ENCODE measurements at regions of chr15 and their contacts with region 1.

Region 1: GRCh38 chr15:76139368-76140073 is 79.7 kb downstream of the TMEM266 start:
- DNase-seq: peak; percentile 78
- H3K4me3 ChIP-seq: no peak overlapping the region
- H3K27ac ChIP-seq: no peak overlapping the region
- H3K4me1 ChIP-seq: peaks cover 3% of the 10 kb centered on the region
- H3K27me3 ChIP-seq: no peaks in the 10 kb centered on the region
- CTCF ChIP-seq: peak; percentile 96

Region 2: GRCh38 chr15:75809986-75810750 is 329.4 kb before region 1 on chr15:
- intact Hi-C with region 1: loop called (anchors 5 kb)
- DNase-seq: peak; percentile 25
- H3K4me3 ChIP-seq: no peak overlapping the region
- H3K27ac ChIP-seq: no peak overlapping the region
- H3K4me1 ChIP-seq: no peaks in the 10 kb centered on the region
- H3K27me3 ChIP-seq: no peaks in the 10 kb centered on the region
- CTCF ChIP-seq: peak; percentile 38

Region 3: DNA sequence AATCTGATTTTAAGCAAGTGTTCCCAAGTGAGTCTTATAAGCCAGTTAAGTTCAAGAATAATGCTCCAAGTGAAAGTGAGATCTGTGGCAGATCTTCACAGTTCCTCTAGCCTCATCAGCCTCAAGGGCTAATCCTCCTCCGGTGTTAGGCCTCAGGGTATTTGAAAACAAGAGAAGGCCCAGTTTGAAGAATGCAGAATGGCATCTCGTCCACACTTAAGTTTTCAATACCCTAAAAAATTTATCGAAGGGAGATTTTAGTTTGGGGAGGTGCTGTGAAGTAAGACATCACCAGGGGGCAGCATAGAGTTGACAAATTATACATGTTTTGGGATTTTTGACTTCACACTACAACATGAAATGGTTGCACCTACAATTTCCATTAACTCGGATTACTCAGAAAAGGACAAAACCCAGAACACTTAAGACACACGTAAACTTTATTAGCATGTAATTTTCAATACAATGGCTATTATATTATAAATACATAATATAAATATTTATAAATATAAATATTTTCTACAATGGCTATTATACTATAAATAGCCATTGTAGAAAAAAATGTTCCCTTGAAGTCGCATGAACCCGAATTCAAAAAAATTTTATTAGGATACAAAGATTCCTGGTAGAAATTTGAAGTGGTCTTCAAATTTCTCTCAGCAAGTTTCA is 82.1 kb before region 1 on chr15:
- intact Hi-C with region 1: loop called (anchors 2 kb)
- DNase-seq: peak; percentile 33
- H3K4me3 ChIP-seq: no peak overlapping the region
- H3K27ac ChIP-seq: no peak overlapping the region
- H3K4me1 ChIP-seq: no peaks in the 10 kb centered on the region
- H3K27me3 ChIP-seq: peaks cover 23% of the 10 kb centered on the region
- CTCF ChIP-seq: peak; percentile 75